Activated CD4-positive, alpha-beta memory T cell treated with anti-CD3 and anti-CD28 coated beads, Interleukin-2, amount 10 ng/mL, durations not matched to agents 7 days and 5 days (primary cell): ENCODE measurements at regions of chr7 and their contacts with region 1.

Region 1: GRCh38 chr7:30284298-30285066 is at the start of gene ZNRF2:
- DNase-seq: peak; percentile 99
- H3K4me3 Mint-ChIP-seq: peak within 1 kb of the TSS; percentile 75
- H3K27ac Mint-ChIP-seq: peak within 1 kb of the TSS; percentile 83
- H3K4me1 Mint-ChIP-seq: peaks cover 40% of the 10 kb centered on the region
- H3K27me3 Mint-ChIP-seq: no peaks in the 10 kb centered on the region
- total RNA-seq, gene ZNRF2: 17.9 to 18.5 TPM

Region 2: GRCh38 chr7:30268586-30268985 is 15.9 kb before region 1 on chr7:
- CTCF ChIA-PET with region 1: no interaction called
- POLR2A ChIA-PET with region 1: no interaction called
- DNase-seq: no peak
- H3K4me3 Mint-ChIP-seq: no peak overlapping the region
- H3K27ac Mint-ChIP-seq: no peak overlapping the region
- H3K4me1 Mint-ChIP-seq: no peaks in the 10 kb centered on the region
- H3K27me3 Mint-ChIP-seq: peaks cover 5% of the 10 kb centered on the region

Region 3: GRCh38 chr7:30301751-30302150 is 17.3 kb after region 1 on chr7:
- CTCF ChIA-PET with region 1: no interaction called
- POLR2A ChIA-PET with region 1: no interaction called
- DNase-seq: no peak
- H3K4me3 Mint-ChIP-seq: no peak overlapping the region
- H3K27ac Mint-ChIP-seq: no peak overlapping the region
- H3K4me1 Mint-ChIP-seq: peaks cover 15% of the 10 kb centered on the region
- H3K27me3 Mint-ChIP-seq: no peaks in the 10 kb centered on the region

Region 4: DNA sequence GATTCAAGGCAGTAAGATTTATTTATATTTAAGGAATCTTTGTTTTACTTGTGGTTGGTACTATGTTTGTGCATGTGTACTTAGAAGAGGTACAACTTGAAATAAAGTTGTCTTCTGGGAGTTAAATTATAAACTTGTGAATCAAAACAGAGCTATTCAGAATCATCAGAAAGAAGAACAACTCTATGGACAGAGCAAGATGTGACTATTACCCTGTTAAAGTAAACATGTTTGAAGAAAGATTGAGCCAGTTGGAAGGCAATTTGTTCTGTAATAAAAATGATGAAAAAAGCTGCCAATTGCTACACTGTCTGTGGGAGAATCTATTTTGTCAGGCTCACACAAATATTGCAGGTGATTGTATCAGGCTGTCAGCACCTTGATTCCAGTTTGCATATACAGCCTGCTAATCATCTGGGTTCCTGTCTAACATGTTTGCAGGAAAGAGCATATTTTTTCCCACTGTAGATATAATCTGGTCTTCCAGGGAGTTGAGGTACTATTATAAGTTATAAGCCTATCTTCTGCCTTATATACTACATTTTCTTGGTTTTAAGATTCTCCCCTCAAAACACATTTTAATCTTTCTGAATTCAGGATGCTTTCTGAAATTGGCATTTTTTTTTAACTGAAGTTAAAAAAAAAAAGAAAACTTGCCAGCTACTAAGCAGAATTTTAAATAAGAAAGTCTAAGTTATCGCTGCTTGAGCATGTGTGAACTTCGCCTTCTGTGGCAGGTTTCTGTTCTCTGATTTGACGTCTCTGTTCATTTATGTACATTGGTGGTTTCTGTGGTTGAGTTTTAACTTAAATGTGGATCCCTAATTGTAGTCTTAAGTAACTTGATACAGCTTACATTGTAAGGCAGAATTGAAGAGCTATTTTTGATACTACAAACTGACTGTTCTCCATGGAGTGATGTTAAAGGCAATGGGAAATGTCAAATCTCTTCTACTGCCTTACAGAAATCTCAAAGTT is 45.9 kb after region 1 on chr7:
- CTCF ChIA-PET with region 1: no interaction called
- POLR2A ChIA-PET with region 1: interaction called, 10 read pairs
- DNase-seq: peak; percentile 41
- H3K4me3 Mint-ChIP-seq: peak overlapping the region; percentile 42
- H3K27ac Mint-ChIP-seq: peak overlapping the region; percentile 62
- H3K4me1 Mint-ChIP-seq: peaks cover 42% of the 10 kb centered on the region
- H3K27me3 Mint-ChIP-seq: no peaks in the 10 kb centered on the region

Region 5: DNA sequence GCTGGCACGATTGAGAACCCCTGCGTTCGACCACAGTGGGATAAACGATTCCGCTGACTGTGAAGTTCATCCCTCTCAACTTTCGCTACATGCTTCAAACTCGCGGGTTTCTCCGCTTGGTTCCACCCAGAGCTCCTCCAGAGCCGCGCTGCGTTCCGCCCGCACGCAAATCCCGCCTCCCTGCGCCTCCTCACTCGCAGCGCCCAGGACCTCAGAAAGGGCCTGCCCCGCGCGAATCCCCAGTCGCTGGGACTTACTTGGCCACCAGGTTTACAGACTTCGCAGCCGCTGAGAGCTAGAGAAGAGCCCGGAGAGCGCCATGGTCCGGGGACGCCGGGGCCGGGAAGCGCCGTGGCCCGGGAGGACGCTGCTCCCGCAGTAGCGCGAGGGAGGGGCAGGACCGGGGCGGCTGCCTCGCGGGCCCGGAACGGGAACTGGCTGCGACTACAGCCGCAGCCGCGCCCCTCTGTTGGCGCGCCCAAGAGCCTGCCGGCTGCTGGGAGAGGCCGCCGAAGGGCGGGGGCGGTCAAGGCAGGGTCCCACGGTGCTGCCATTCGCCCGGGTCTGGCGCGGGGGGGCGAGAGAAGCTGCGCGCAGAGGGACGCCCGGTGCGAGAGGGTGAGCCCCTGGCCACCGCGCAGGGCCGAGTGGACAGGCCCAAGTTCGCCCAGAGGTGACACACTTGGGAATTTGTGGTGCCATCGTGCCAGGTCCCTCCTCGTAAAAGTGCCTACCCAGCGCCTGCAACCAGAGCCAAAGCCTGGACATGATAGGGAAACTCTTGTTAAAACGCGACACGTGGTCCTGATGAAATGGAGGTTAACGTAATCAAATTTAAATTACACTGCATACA is 194.1 kb after region 1 on chr7 and contains the start of gene NOD1:
- CTCF ChIA-PET with region 1: no interaction called
- POLR2A ChIA-PET with region 1: interaction called, 18 read pairs
- DNase-seq: peak; percentile 75
- H3K4me3 Mint-ChIP-seq: peak within 1 kb of the TSS; percentile 93
- H3K27ac Mint-ChIP-seq: peak within 1 kb of the TSS; percentile 87
- H3K4me1 Mint-ChIP-seq: peaks cover 55% of the 10 kb centered on the region
- H3K27me3 Mint-ChIP-seq: no peaks in the 10 kb centered on the region
- total RNA-seq, gene NOD1: 19.6 to 22.6 TPM